MCF 10A (cell line): ENCODE measurements at regions of chr11 and their contacts with region 1.

Region 1: DNA sequence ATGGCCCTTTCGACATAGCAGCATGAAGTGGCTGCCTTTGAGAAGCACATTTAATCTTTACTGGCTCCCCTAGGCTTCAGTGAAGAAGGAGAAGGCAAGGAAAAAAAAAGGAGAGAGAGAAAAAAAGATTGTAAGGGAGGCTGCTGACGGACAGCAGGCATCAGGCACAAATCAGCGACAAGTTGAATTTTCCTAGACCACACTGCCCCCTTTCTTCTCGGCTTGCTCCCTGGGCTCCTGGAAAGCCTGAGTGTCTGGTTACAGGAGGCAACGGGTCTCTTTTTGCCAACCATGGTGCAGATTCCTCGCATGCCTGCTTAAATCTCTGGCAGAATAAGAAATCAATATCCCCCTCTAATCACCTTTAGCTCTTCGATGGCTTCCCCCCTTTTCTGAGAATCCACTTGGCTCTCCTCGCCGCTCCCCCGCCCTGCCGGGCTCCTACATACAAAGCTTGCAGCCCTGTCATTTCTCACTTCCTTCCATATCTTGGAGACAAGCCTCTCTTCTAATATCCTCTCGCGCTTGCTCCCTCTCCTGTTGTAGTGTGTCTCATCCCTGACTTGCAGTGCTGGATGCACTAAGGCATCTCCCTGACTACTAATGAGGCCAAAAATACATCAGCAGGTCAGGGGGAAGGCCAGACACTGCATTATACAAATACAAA is 14.3 kb downstream of the BLID start:
- DNase-seq: peak; percentile 85
- H3K4me3 Mint-ChIP-seq: no peak overlapping the region
- H3K27ac Mint-ChIP-seq: no peak overlapping the region
- H3K4me1 Mint-ChIP-seq: peaks cover 27% of the 10 kb centered on the region
- H3K27me3 Mint-ChIP-seq: no peaks in the 10 kb centered on the region
- CTCF ChIP-seq: peak; percentile 41

Region 2: DNA sequence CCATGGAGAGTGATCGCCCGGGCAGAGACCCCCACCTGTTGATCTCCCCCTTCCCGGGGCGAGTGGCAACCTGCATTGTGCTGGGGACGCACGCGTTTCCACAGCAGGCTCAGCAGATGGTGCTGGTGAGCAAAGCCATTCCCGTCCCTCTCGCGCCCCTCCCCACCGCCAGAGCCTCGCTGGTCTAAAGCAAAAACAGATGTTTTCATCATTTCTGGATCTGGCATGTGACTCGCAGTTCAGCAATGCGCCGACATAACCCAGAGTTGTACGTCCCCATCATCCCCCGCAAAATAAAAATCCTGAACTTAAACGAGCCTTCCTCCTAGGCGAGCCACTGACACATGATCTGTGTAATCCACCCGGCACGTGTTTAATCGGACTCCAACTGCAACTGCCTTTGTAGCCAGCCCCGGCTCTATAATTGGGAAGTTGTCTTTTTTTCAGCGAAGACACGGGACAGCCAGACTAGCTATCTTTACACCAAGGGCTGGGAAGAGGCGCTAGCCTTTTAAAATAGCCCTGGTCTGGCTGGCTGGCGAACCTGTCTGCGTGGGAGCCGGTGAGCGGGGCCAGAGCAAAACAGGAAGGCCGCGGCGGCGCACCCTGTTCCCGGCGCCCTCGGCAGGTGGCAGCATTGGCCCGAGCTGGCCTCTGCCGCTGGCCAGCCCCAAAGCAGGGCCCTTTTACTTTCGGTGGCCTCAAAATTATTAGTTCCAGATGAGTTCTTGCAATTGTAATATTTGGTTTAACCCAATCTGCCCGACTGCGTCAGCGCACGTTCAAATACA is 446.0 kb before region 1 on chr11:
- CTCF ChIA-PET with region 1: interaction called, 82 read pairs
- POLR2A ChIA-PET with region 1: interaction called, 41 read pairs
- intact Hi-C with region 1: loop called (anchors 1 kb)
- DNase-seq: peak; percentile 82
- H3K4me3 Mint-ChIP-seq: peak overlapping the region; percentile 69
- H3K27ac Mint-ChIP-seq: peak overlapping the region; percentile 92
- H3K4me1 Mint-ChIP-seq: peaks cover 24% of the 10 kb centered on the region
- H3K27me3 Mint-ChIP-seq: no peaks in the 10 kb centered on the region
- CTCF ChIP-seq: peak; percentile 92

Region 3: DNA sequence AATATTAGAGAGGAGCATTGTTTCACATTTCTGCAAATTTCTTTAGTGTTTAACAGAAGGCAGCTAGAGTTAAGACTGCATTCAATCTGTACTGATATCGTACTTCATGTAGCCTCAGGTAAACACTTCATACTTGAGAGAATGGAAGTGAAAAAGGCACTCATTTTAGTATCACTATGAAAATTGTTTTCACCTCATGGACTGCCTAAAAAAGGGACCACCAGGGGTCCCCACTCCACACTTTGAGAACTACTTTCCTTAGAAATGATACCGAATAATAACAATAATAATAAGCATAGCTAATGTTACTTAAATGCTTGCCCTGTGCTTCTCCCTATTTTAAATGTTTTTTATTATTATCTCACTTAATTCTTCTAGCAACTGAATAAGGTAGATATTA is 80.9 kb before region 1 on chr11:
- CTCF ChIA-PET with region 1: no interaction called
- POLR2A ChIA-PET with region 1: no interaction called
- intact Hi-C with region 1: loop called (anchors 5 kb)
- DNase-seq: peak; percentile 16
- H3K4me3 Mint-ChIP-seq: no peak overlapping the region
- H3K27ac Mint-ChIP-seq: no peak overlapping the region
- H3K4me1 Mint-ChIP-seq: peaks cover under 1% of the 10 kb centered on the region
- H3K27me3 Mint-ChIP-seq: no peaks in the 10 kb centered on the region
- CTCF ChIP-seq: no peak

Region 4: GRCh38 chr11:122123263-122123929 is 21.6 kb after region 1 on chr11:
- CTCF ChIA-PET with region 1: interaction called, 4 read pairs
- POLR2A ChIA-PET with region 1: interaction called, 32 read pairs
- intact Hi-C with region 1: no loop called
- DNase-seq: peak; percentile 42
- H3K4me3 Mint-ChIP-seq: no peak overlapping the region
- H3K27ac Mint-ChIP-seq: peak overlapping the region; percentile 75
- H3K4me1 Mint-ChIP-seq: peaks cover 22% of the 10 kb centered on the region
- H3K27me3 Mint-ChIP-seq: no peaks in the 10 kb centered on the region
- CTCF ChIP-seq: no peak

Region 5: GRCh38 chr11:122159173-122159721 is 57.5 kb after region 1 on chr11:
- CTCF ChIA-PET with region 1: interaction called, 32 read pairs
- POLR2A ChIA-PET with region 1: interaction called, 290 read pairs
- intact Hi-C with region 1: loop called (anchors 2 kb)
- DNase-seq: peak; percentile 75
- H3K4me3 Mint-ChIP-seq: peak overlapping the region; percentile 76
- H3K27ac Mint-ChIP-seq: peak overlapping the region; percentile 96
- H3K4me1 Mint-ChIP-seq: peaks cover 76% of the 10 kb centered on the region
- H3K27me3 Mint-ChIP-seq: no peaks in the 10 kb centered on the region
- CTCF ChIP-seq: no peak

Region 6: DNA sequence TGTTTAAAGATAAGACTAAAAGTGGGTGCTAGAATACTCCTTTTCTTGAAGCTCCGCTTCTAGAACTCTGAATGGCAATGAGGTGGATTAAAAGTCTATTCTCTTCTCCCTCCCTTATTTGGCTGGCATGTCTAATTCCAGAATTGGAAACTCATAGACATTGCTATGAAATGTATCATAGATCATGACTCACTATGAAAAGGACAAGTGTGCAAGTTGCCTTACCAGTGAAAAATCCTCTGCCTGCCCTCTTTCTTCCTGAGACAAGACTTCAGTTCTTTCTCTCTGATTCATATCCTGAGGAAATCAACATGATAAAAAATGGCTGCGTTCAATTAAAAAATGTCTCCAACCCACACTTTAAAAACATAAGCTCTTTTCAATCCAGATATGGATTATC is 87.5 kb after region 1 on chr11:
- CTCF ChIA-PET with region 1: interaction called, 18 read pairs
- POLR2A ChIA-PET with region 1: interaction called, 78 read pairs
- intact Hi-C with region 1: no loop called
- DNase-seq: peak; percentile 93
- H3K4me3 Mint-ChIP-seq: peak overlapping the region; percentile 18
- H3K27ac Mint-ChIP-seq: peak overlapping the region; percentile 83
- H3K4me1 Mint-ChIP-seq: peaks cover 38% of the 10 kb centered on the region
- H3K27me3 Mint-ChIP-seq: no peaks in the 10 kb centered on the region
- CTCF ChIP-seq: no peak

Region 7: DNA sequence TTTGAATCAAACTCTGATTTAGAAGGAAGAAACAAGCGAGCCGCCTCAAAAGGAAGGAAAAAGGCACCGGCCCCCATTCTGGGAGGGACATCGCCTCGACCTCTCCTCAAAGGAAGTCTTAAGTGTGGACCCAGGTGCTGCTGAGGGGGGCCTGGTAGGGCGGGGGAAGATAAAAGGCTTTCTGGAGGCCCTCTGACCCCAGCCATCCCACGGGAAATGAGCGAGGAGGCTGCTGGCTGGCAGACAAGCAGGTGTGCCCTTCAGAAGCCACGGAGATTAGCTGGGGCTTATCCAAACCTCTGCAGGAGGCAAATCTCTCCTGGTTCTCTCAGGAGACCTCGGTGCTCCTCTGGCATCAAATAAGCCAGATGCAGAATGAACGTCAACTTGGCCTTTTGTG is 185.6 kb after region 1 on chr11:
- CTCF ChIA-PET with region 1: no interaction called
- POLR2A ChIA-PET with region 1: no interaction called
- intact Hi-C with region 1: no loop called
- DNase-seq: no peak
- H3K4me3 Mint-ChIP-seq: no peak overlapping the region
- H3K27ac Mint-ChIP-seq: no peak overlapping the region
- H3K4me1 Mint-ChIP-seq: no peaks in the 10 kb centered on the region
- H3K27me3 Mint-ChIP-seq: no peaks in the 10 kb centered on the region
- CTCF ChIP-seq: no peak

Region 8: GRCh38 chr11:122505304-122506006 is 403.7 kb after region 1 on chr11:
- CTCF ChIA-PET with region 1: interaction called, 3 read pairs
- POLR2A ChIA-PET with region 1: interaction called, 6 read pairs
- intact Hi-C with region 1: loop called (anchors 1 kb)
- DNase-seq: peak; percentile 81
- H3K4me3 Mint-ChIP-seq: no peak overlapping the region
- H3K27ac Mint-ChIP-seq: no peak overlapping the region
- H3K4me1 Mint-ChIP-seq: peaks cover 6% of the 10 kb centered on the region
- H3K27me3 Mint-ChIP-seq: peaks cover 25% of the 10 kb centered on the region
- CTCF ChIP-seq: peak; percentile 93